Activated CD4-positive, alpha-beta memory T cell treated with anti-CD3 and anti-CD28 coated beads, Interleukin-2, amount 10 ng/mL, durations not matched to agents 7 days and 5 days (primary cell): ENCODE measurements at regions of chr1 and their contacts with region 1.

Region 1: GRCh38 chr1:67834246-67834877 is 1.1 kb upstream of the GNG12 start:
- DNase-seq: no peak
- H3K4me3 Mint-ChIP-seq: no peak overlapping the region
- H3K27ac Mint-ChIP-seq: no peak overlapping the region
- H3K4me1 Mint-ChIP-seq: peaks cover 16% of the 10 kb centered on the region
- H3K27me3 Mint-ChIP-seq: peaks cover 69% of the 10 kb centered on the region

Region 2: DNA sequence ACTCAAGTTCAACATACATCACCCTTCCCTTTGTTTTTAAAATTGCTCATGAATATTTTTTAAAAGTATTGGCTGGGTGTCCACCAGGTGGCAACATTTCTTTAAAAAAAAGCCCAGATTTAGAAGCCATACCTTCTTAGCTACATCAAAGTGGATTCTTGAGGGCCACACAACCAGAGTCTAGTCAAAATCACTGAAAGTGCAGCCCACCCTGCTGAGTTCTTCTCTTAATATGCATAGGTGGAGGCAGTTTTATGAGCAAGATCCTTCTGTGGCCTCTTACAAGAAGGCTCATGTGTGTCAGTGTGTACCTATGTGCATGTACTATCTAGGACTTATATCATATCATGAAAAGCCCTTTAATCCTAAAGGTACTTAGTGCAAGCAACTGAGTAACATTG is 15.8 kb after region 1 on chr1:
- CTCF ChIA-PET with region 1: interaction called, 13 read pairs
- POLR2A ChIA-PET with region 1: no interaction called
- DNase-seq: no peak
- H3K4me3 Mint-ChIP-seq: no peak overlapping the region
- H3K27ac Mint-ChIP-seq: no peak overlapping the region
- H3K4me1 Mint-ChIP-seq: no peaks in the 10 kb centered on the region
- H3K27me3 Mint-ChIP-seq: peaks cover 1% of the 10 kb centered on the region